ENCODE measurements at regions of chr10 and their contacts with region 1.

Region 1: GRCh38 chr10:70404036-70404786 is at the start of gene EIF4EBP2:
- DNase-seq: peak; percentile 86 to 99
- H3K4me3 ChIP-seq: peak within 1 kb of the TSS; percentile 84 to 96
- H3K27ac ChIP-seq: peak within 1 kb of the TSS; percentile 98 to 100
- H3K4me1 ChIP-seq: peaks cover 6 to 25% of the 10 kb centered on the region in 2 donors
- H3K27me3 ChIP-seq: no peaks in the 10 kb centered on the region
- CTCF ChIP-seq: no peak
- total RNA-seq, gene EIF4EBP2: 35.4 TPM

Region 2: GRCh38 chr10:70381471-70382421 is 22.5 kb before region 1 on chr10:
- intact Hi-C with region 1: loop called (anchors 1 kb)
- DNase-seq: peak in 1 of 2 donors; percentile 73
- H3K4me3 ChIP-seq: peak overlapping the region; percentile 70 to 86
- H3K27ac ChIP-seq: peak overlapping the region; percentile 16 to 56
- H3K4me1 ChIP-seq: peaks cover 0 to 7% of the 10 kb centered on the region in 2 donors
- H3K27me3 ChIP-seq: no peaks in the 10 kb centered on the region
- CTCF ChIP-seq: no peak

Region 3: DNA sequence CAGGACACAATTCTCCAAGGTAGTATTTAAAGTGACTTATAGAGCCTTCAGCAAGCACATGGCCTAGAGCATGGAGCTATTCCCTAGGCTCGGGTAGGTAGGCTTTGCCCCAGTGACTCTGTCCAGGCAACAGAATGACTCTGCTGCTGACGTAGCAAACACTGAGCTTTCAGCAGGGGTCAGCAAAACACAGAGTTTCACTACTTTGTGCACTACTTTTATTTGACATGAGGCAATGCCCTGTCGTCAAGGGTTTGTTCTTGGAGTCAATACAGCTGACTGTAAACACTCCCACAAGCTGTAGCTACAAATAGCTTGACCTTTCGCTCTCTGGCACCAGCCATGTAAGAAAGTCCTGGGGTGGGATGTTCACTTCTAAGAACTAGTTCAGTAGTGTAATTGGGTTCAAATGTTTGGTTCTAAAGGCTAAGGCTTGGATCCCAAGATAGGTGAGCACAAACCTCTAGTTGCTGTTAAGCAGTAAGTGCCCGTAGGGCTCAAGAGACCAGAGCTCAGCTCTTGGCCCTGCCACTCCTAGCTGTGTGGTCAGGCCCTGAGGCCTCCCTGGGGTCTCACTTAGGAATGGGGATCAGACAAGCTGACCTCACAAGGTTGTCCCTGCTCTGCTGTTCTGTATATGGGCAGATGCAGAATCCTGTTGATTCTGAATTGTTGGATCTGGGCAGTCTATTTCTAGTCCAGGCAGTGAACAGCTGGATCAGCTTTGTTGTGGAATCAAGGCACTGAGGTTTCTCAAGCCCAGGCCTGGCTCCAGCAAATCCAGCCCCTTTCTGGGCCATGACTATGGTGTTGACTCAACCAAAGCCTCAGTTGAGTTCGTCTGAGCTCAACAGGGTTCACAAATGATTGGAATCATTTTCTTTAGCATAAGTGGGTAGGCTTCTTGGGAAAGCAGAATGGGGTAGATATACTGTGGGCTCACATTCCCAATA is 26.6 kb after region 1 on chr10:
- intact Hi-C with region 1: loop called (anchors 2 kb)
- DNase-seq: peak; percentile 43 to 86
- H3K4me3 ChIP-seq: peak overlapping the region in 1 of 2 donors; percentile 8
- H3K27ac ChIP-seq: peak overlapping the region; percentile 70 to 89
- H3K4me1 ChIP-seq: peaks cover 6 to 23% of the 10 kb centered on the region in 2 donors
- H3K27me3 ChIP-seq: no peaks in the 10 kb centered on the region
- CTCF ChIP-seq: no peak

Measured in ascending aorta (tissue), 2 donors.